Activated naive CD4-positive, alpha-beta T cell treated with anti-CD3 and anti-CD28 coated beads for 36 hours (primary cell): ENCODE measurements at regions of chr2 and their contacts with region 1.

Region 1: GRCh38 chr2:205372141-205372540 is 310.2 kb upstream of the NRP2 start:
- DNase-seq: no peak
- H3K4me3 Mint-ChIP-seq: no peak overlapping the region
- H3K27ac Mint-ChIP-seq: no peak overlapping the region
- H3K4me1 Mint-ChIP-seq: peaks cover 29% of the 10 kb centered on the region
- H3K27me3 Mint-ChIP-seq: no peaks in the 10 kb centered on the region

Region 2: GRCh38 chr2:204948024-204948763 is 423.9 kb before region 1 on chr2:
- CTCF ChIA-PET with region 1: no interaction called
- intact Hi-C with region 1: loop called (anchors 5 kb)
- DNase-seq: peak; percentile 12
- H3K4me3 Mint-ChIP-seq: no peak overlapping the region
- H3K27ac Mint-ChIP-seq: peak overlapping the region; percentile 66
- H3K4me1 Mint-ChIP-seq: peaks cover 53% of the 10 kb centered on the region
- H3K27me3 Mint-ChIP-seq: no peaks in the 10 kb centered on the region

Region 3: GRCh38 chr2:205474741-205475415 is 102.7 kb after region 1 on chr2:
- CTCF ChIA-PET with region 1: no interaction called
- intact Hi-C with region 1: loop called (anchors 1 kb)
- DNase-seq: no peak
- H3K4me3 Mint-ChIP-seq: no peak overlapping the region
- H3K27ac Mint-ChIP-seq: no peak overlapping the region
- H3K4me1 Mint-ChIP-seq: peaks cover 2% of the 10 kb centered on the region
- H3K27me3 Mint-ChIP-seq: peaks cover 10% of the 10 kb centered on the region

Region 4: DNA sequence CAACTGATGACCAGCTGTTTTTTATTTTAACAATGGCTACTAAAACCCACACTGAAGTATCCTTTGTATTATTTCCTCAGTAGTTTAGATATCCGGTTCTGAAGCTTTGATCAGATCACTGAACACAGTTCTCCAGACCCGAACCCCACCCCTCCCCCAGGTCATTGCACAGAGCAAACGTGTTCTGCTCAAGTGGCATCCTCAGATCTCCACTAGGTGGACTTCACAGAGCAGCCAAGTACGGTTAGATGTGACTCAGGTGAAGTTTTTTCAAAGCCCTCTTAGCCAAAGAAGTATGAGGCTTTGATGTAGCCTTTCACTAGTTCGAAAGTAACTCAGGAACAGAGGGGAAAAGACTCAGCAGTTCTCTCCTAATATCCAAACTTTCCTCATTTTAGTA is 167.5 kb after region 1 on chr2:
- CTCF ChIA-PET with region 1: no interaction called
- intact Hi-C with region 1: loop called (anchors 5 kb)
- DNase-seq: no peak
- H3K4me3 Mint-ChIP-seq: no peak overlapping the region
- H3K27ac Mint-ChIP-seq: no peak overlapping the region
- H3K4me1 Mint-ChIP-seq: peaks cover 26% of the 10 kb centered on the region
- H3K27me3 Mint-ChIP-seq: no peaks in the 10 kb centered on the region